CD4-positive, alpha-beta T cell (primary cell): ENCODE measurements at regions of chr6 and their contacts with region 1.

Region 1: GRCh38 chr6:108526739-108527174 is 34.0 kb upstream of the FOXO3 start:
- DNase-seq: peak in 3 of 14 experiments; percentile 30 to 56 (median 48)
- ATAC-seq: no peak
- H3K4me3 ChIP-seq: no peak overlapping the region
- H3K4me3 Mint-ChIP-seq: no peak overlapping the region
- H3K27ac ChIP-seq: no peak overlapping the region
- H3K27ac Mint-ChIP-seq: no peak overlapping the region
- H3K4me1 ChIP-seq: no peaks in the 10 kb centered on the region
- H3K4me1 Mint-ChIP-seq: no peaks in the 10 kb centered on the region
- H3K27me3 ChIP-seq: no peaks in the 10 kb centered on the region
- H3K27me3 Mint-ChIP-seq: no peaks in the 10 kb centered on the region
- CTCF ChIP-seq: peak; percentile 71

Region 2: GRCh38 chr6:107977283-107977682 is 549.5 kb before region 1 on chr6:
- CTCF ChIA-PET with region 1: no interaction called
- POLR2A ChIA-PET with region 1: no interaction called
- intact Hi-C with region 1: loop called (anchors 1 to 2 kb)
- DNase-seq: no peak
- ATAC-seq: no peak
- H3K4me3 ChIP-seq: no peak overlapping the region
- H3K4me3 Mint-ChIP-seq: no peak overlapping the region
- H3K27ac ChIP-seq: no peak overlapping the region
- H3K27ac Mint-ChIP-seq: no peak overlapping the region
- H3K4me1 ChIP-seq: peaks cover 8% of the 10 kb centered on the region
- H3K4me1 Mint-ChIP-seq: no peaks in the 10 kb centered on the region
- H3K27me3 ChIP-seq: no peaks in the 10 kb centered on the region
- H3K27me3 Mint-ChIP-seq: no peaks in the 10 kb centered on the region
- CTCF ChIP-seq: peak; percentile 19

Region 3: GRCh38 chr6:108113557-108114519 is 412.9 kb before region 1 on chr6:
- CTCF ChIA-PET with region 1: no interaction called
- POLR2A ChIA-PET with region 1: no interaction called
- intact Hi-C with region 1: loop called in 1 of 2 experiments (anchors 1 kb)
- DNase-seq: peak in 3 of 14 experiments; percentile 37 to 48 (median 44)
- ATAC-seq: no peak
- H3K4me3 ChIP-seq: no peak overlapping the region
- H3K4me3 Mint-ChIP-seq: peak overlapping the region; percentile 56
- H3K27ac ChIP-seq: no peak overlapping the region
- H3K27ac Mint-ChIP-seq: no peak overlapping the region
- H3K4me1 ChIP-seq: peaks cover 53% of the 10 kb centered on the region
- H3K4me1 Mint-ChIP-seq: peaks cover 42% of the 10 kb centered on the region
- H3K27me3 ChIP-seq: peaks cover 64 to 92% of the 10 kb centered on the region in 2 experiments
- H3K27me3 Mint-ChIP-seq: peaks cover 88% of the 10 kb centered on the region
- CTCF ChIP-seq: no peak

Region 4: GRCh38 chr6:108250240-108250866 is 276.4 kb before region 1 on chr6:
- CTCF ChIA-PET with region 1: no interaction called
- POLR2A ChIA-PET with region 1: no interaction called
- intact Hi-C with region 1: loop called in 1 of 2 experiments (anchors 10 kb)
- DNase-seq: peak in 1 of 14 experiments; percentile 22
- ATAC-seq: peak; percentile 43
- H3K4me3 ChIP-seq: no peak overlapping the region
- H3K4me3 Mint-ChIP-seq: no peak overlapping the region
- H3K27ac ChIP-seq: no peak overlapping the region
- H3K27ac Mint-ChIP-seq: no peak overlapping the region
- H3K4me1 ChIP-seq: peaks cover 14% of the 10 kb centered on the region
- H3K4me1 Mint-ChIP-seq: peaks cover 67% of the 10 kb centered on the region
- H3K27me3 ChIP-seq: no peaks in the 10 kb centered on the region
- H3K27me3 Mint-ChIP-seq: no peaks in the 10 kb centered on the region
- CTCF ChIP-seq: no peak